ENCODE measurements at regions of chr2 and their contacts with region 1.

Region 1: DNA sequence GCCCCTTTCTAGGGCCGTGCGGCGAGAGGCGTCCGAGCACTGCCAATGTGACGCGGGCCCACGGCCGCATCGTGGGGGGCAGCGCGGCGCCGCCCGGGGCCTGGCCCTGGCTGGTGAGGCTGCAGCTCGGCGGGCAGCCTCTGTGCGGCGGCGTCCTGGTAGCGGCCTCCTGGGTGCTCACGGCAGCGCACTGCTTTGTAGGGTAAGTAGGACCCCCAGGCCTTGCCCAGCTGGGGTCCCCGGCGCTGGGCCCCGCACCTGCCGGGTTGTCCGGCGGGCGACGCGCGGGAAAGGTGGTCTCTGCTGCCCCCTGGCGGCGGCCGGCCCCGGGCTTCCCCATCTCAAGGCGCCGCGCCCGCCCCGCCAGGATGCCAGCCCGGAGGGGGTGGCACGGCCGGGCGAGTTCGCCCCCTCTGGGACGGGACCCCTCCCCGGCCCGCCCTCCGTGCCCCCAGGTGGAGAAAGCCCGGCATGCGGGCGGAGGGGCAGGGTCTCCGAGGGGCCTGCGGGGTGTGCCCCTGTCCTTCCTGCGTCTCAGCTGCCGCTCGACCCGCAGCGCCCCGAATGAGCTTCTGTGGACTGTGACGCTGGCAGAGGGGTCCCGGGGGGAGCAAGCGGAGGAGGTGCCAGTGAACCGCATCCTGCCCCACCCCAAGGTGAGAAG is 1.9 kb downstream of the PRSS56 start:
- DNase-seq: no peak
- ATAC-seq: peak; percentile 86
- H3K4me3 ChIP-seq: no peak overlapping the region
- H3K27ac ChIP-seq: no peak overlapping the region
- H3K4me1 ChIP-seq: peaks cover 0 to 6% of the 10 kb centered on the region in 2 experiments; a peak in 1 of 4 replicates
- H3K27me3 ChIP-seq: no peaks in the 10 kb centered on the region
- CTCF ChIP-seq: peak; percentile 53 to 66 (median 63); a peak in 5 of 6 replicates
- POLR2A ChIP-seq: no peak
- RAD21 ChIP-seq: peak; percentile 87

Region 2: DNA sequence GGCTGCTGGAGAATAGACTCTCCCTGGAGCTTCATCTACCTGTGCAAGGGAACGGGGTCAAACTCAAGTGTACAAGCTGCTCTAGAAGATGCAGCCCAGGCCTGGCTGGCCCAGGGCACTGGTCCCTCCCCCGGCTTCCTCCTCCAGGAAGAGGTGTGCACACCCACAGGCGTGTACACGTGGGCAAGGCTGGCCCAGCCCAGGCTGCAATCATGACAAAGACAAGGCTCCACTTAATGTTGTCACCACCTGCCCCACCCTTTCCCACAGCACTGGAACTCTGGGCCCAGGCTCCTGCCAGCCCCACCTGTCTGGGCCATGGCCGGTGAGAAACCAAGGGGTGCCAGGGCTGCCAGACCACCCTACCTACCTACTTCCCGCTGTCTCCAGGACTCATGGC is 173.2 kb before region 1 on chr2:
- CTCF ChIA-PET with region 1: no interaction called
- POLR2A ChIA-PET with region 1: no interaction called
- RAD21 ChIA-PET with region 1: no interaction called
- intact Hi-C with region 1: loop called (anchors 10 kb)
- DNase-seq: peak; percentile 24
- ATAC-seq: peak; percentile 85
- H3K4me3 ChIP-seq: no peak overlapping the region
- H3K27ac ChIP-seq: no peak overlapping the region
- H3K4me1 ChIP-seq: peaks cover 6 to 13% of the 10 kb centered on the region in 2 experiments; a peak in 1 of 4 replicates
- H3K27me3 ChIP-seq: no peaks in the 10 kb centered on the region
- CTCF ChIP-seq: no peak
- POLR2A ChIP-seq: no peak
- RAD21 ChIP-seq: no peak

Region 3: GRCh38 chr2:232444409-232445148 is 77.5 kb before region 1 on chr2:
- CTCF ChIA-PET with region 1: interaction called, 5 read pairs
- POLR2A ChIA-PET with region 1: no interaction called
- RAD21 ChIA-PET with region 1: interaction called in 1 of 2 experiments, 3 read pairs
- intact Hi-C with region 1: loop called (anchors 1 kb)
- DNase-seq: peak; percentile 56
- ATAC-seq: peak; percentile 76
- H3K4me3 ChIP-seq: no peak overlapping the region
- H3K27ac ChIP-seq: peak overlapping the region; percentile 25; the same call in 1 of the 2 replicates
- H3K4me1 ChIP-seq: peaks cover 0 to 13% of the 10 kb centered on the region in 2 experiments; a peak in 2 of 4 replicates
- H3K27me3 ChIP-seq: no peaks in the 10 kb centered on the region
- CTCF ChIP-seq: peak; percentile 59 to 93 (median 79); a peak in 5 of 6 replicates
- POLR2A ChIP-seq: no peak
- RAD21 ChIP-seq: peak; percentile 20; the same call in 1 of the 2 replicates